ENCODE measurements at regions of chr1 and their contacts with region 1.

Region 1: GRCh38 chr1:36300526-36300925 is 5.6 kb upstream of the SH3D21 start:
- DNase-seq: peak; percentile 39
- H3K4me3 Mint-ChIP-seq: no peak overlapping the region
- H3K27ac Mint-ChIP-seq: peak overlapping the region; percentile 77
- H3K4me1 Mint-ChIP-seq: peaks cover 64% of the 10 kb centered on the region
- H3K27me3 Mint-ChIP-seq: no peaks in the 10 kb centered on the region

Region 2: DNA sequence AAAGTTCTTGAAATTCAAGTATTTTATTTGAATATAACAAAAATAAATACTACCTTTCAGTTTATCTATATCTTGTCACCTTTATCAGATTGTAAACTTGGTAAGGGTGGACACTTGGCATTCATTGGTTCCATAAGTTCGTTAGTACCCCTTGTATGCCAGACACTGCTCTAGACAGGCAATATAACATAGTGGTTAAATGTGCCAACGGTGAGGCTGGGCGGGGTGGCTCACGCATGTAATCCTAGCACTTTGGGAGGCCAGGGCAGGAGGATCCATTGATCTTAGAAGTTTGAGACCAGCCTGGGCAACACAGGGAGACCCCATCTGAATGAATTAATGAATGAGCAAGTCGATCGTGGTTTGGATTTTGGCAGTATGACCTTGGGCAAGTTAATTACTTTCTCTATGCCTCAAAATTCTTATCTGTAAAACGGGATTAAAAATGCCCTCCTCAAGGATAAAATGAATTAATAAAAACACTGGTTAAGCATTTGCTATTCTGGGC is 20.7 kb before region 1 on chr1:
- CTCF ChIA-PET with region 1: interaction called, 10 read pairs
- intact Hi-C with region 1: no loop called
- DNase-seq: no peak
- H3K4me3 Mint-ChIP-seq: no peak overlapping the region
- H3K27ac Mint-ChIP-seq: peak overlapping the region; percentile 66
- H3K4me1 Mint-ChIP-seq: peaks cover 38% of the 10 kb centered on the region
- H3K27me3 Mint-ChIP-seq: no peaks in the 10 kb centered on the region